ENCODE measurements at regions of chr4 and their contacts with region 1.

Region 1: DNA sequence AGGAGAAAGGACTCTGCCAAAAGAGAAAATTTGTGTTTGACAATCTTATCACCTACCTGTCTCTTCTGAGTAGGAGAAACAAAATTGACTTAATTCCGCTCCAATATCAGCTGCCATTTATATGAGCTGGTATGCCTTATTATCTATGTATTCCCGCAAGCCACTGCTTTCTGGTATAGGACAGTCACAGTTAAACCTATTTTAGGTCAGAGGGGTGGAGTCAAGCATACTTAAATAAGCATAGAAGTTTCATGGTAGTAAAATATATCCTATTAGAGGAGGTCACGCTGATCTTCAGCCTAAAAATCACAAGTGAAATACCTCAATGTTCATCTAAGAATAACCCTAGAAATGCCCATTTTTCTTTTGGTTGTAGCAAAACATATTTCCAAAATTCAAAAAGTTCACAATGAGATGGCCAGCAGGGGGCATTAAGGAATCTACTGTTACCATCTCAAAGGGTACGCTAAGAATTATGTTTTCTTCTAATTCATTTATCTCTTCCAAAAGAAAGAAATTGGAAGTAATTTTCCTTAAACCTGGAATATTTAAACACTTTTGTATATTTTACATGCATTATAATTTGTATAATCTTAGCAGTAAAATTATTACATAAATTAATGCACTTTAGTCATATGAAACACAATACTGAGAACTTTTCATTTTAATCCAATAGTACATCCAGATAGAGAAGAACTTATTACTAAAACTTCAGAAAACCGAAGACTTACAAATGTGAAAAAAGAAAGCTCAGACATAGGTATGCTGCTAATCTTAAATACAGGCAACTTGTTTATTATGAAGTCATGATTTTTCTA is 10.5 kb downstream of the PPAT start:
- DNase-seq: no peak
- ATAC-seq: peak in 1 of 2 donors; percentile 44
- H3K4me3 ChIP-seq: no peak overlapping the region
- H3K27ac ChIP-seq: no peak overlapping the region
- H3K4me1 ChIP-seq: peaks cover 0 to 8% of the 10 kb centered on the region in 2 donors
- H3K27me3 ChIP-seq: no peaks in the 10 kb centered on the region
- CTCF ChIP-seq: peak; percentile 41 to 70 (median 58)
- POLR2A ChIP-seq: no peak

Region 2: DNA sequence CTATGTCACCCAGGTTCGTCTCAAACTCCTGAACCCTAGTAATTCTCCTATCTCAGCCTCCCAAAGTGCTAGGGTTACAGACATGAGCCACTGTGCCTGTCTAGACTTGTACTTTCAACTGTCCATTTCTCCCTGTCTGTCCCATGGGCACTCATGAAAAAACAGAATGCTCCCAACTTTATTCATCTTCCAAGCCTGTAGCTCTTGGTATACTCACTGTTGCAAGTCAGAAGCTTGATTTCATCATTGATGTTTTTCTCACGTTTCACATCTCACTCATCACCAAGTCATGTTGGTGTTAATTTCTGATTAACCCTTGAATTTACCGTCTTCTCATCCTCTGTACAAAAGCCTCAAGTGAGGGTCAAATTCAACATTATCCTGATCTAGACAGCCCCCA is 35.2 kb after region 1 on chr4:
- in situ Hi-C with region 1: no loop called
- intact Hi-C with region 1: no loop called
- DNase-seq: no peak
- ATAC-seq: no peak
- H3K4me3 ChIP-seq: no peak overlapping the region
- H3K27ac ChIP-seq: no peak overlapping the region
- H3K4me1 ChIP-seq: peaks cover 10 to 11% of the 10 kb centered on the region in 2 donors
- H3K27me3 ChIP-seq: no peaks in the 10 kb centered on the region
- CTCF ChIP-seq: no peak
- POLR2A ChIP-seq: no peak

Region 3: GRCh38 chr4:56544573-56545131 is 119.7 kb after region 1 on chr4:
- in situ Hi-C with region 1: no loop called
- intact Hi-C with region 1: loop called (anchors 1 kb)
- DNase-seq: peak; percentile 52 to 56
- ATAC-seq: peak; percentile 96 to 97
- H3K4me3 ChIP-seq: peak overlapping the region; percentile 34 to 53 (median 48)
- H3K27ac ChIP-seq: no peak overlapping the region
- H3K4me1 ChIP-seq: peaks cover 0 to 4% of the 10 kb centered on the region in 2 donors
- H3K27me3 ChIP-seq: no peaks in the 10 kb centered on the region
- CTCF ChIP-seq: peak; percentile 82 to 98 (median 90)
- POLR2A ChIP-seq: no peak

Measured in gastrocnemius medialis (tissue), 4 donors.